Activated CD4-positive, alpha-beta T cell treated with anti-CD3 and anti-CD28 coated beads for 36 hours (primary cell): ENCODE measurements at regions of chr15 and their contacts with region 1.

Region 1: DNA sequence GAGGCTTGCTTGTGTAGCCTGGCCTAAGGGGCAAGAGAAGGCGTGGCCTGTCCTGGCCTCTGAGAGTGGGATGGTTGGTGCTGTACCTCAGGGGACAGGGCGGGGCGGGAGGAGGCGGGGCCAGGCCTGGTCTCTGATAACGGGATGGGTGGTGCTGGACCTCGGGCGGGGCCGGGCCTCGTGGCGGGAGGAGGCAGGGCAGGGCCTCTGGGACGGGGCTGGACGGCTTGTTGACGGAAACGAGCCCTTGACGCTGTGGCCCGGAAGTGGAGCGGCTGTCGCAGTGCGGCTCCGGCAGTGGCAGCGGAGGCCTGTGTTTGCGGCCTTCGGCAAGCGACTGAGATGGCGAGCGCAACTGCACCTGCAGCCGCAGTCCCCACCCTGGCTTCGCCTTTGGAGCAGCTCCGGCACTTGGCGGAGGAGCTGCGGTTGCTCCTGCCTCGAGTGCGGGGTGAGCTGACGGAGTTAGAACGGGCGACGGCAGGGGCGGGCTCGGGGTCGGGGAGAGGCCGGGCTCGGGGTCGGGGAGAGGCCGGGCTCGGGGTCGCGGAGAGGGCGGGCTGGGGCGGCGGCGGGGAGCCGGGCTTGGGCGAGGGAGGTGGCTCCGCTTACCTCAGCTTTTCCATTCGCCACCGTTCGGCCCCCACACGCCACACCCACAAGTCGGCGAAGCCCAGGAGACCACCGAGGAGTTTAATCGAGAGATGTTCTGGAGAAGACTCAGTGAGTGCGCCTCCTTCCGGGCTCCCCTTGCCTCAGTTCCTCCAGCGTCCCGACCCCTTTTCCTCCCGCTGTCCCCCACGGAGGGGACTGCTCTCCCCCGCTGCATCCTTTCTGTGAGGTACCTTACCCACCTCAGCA is at the start of gene CCNDBP1:
- DNase-seq: peak; percentile 94
- ATAC-seq: peak; percentile 96
- H3K4me3 Mint-ChIP-seq: peak within 1 kb of the TSS; percentile 90
- H3K27ac Mint-ChIP-seq: peak within 1 kb of the TSS; percentile 94
- H3K4me1 Mint-ChIP-seq: peaks cover 26% of the 10 kb centered on the region
- H3K27me3 Mint-ChIP-seq: no peaks in the 10 kb centered on the region
- total RNA-seq, gene CCNDBP1: 45.8 to 51.6 TPM

Region 2: GRCh38 chr15:42920519-42921227 is 264.7 kb before region 1 on chr15 and contains the start of gene TTBK2:
- CTCF ChIA-PET with region 1: no interaction called
- POLR2A ChIA-PET with region 1: no interaction called
- intact Hi-C with region 1: loop called in 1 of 2 experiments (anchors 1 kb)
- DNase-seq: peak; percentile 98
- ATAC-seq: peak; percentile 95
- H3K4me3 Mint-ChIP-seq: peak within 1 kb of the TSS; percentile 96
- H3K27ac Mint-ChIP-seq: peak within 1 kb of the TSS; percentile 96
- H3K4me1 Mint-ChIP-seq: peaks cover 26% of the 10 kb centered on the region
- H3K27me3 Mint-ChIP-seq: no peaks in the 10 kb centered on the region
- total RNA-seq, gene TTBK2: 9.7 to 10.5 TPM

Region 3: GRCh38 chr15:43133430-43134156 is 51.8 kb before region 1 on chr15 and contains the start of gene TMEM62:
- CTCF ChIA-PET with region 1: no interaction called
- POLR2A ChIA-PET with region 1: no interaction called
- intact Hi-C with region 1: loop called in 1 of 2 experiments (anchors 1 kb)
- DNase-seq: peak; percentile 82
- ATAC-seq: peak; percentile 80
- H3K4me3 Mint-ChIP-seq: peak within 1 kb of the TSS; percentile 79
- H3K27ac Mint-ChIP-seq: peak within 1 kb of the TSS; percentile 84
- H3K4me1 Mint-ChIP-seq: peaks cover 18% of the 10 kb centered on the region
- H3K27me3 Mint-ChIP-seq: no peaks in the 10 kb centered on the region
- total RNA-seq, gene TMEM62: 10.9 to 12.9 TPM

Region 4: DNA sequence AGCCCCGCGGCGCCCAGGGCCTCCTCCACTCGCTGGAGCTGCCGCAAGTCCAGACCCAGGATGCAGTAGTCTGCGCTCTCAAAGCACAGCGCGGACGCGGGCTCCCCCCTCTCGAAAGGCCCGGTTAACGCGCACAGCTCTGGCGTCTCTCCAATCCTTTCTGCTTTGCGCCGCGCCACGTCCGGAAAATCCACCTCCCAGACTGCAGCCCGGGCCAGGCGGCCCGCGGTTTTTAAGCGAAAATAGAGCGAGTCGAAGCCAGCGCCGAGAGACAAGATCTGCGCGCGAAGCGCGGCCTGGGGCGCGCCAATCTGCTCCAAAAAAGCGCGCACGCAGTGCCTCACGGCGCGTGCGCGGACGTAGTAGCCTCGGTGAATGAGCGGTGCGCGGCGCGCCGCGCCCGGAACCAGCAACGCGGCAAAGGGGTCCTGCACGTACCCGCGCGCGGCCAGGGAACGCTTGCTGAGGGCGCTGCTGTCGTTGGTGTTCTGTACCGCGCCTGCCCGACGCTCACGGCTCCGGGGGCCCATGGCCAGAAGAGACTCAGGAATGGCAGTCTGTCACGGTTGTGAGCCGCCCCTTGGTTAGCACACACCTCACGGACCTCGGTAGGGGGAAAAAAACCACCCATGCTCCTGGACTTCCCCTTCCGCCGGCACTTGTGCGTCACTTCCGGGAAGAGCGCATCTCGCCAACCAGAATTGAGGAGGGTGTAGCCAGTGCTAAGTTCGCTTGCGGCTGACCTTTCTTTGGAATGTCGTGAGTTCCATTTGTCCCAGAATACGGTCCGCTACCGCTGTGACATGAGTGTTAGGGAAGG is 144.8 kb after region 1 on chr15 and contains the start of gene LCMT2:
- CTCF ChIA-PET with region 1: no interaction called
- POLR2A ChIA-PET with region 1: no interaction called
- intact Hi-C with region 1: loop called in 1 of 2 experiments (anchors 1 kb)
- DNase-seq: peak; percentile 93
- ATAC-seq: peak; percentile 91
- H3K4me3 Mint-ChIP-seq: peak within 1 kb of the TSS; percentile 91
- H3K27ac Mint-ChIP-seq: peak within 1 kb of the TSS; percentile 95
- H3K4me1 Mint-ChIP-seq: peaks cover 32% of the 10 kb centered on the region
- H3K27me3 Mint-ChIP-seq: no peaks in the 10 kb centered on the region
- total RNA-seq, gene LCMT2: 7.6 to 8.5 TPM

Region 5: GRCh38 chr15:43776718-43777583 is 591.6 kb after region 1 on chr15 and contains the start of gene ELL3:
- CTCF ChIA-PET with region 1: no interaction called
- POLR2A ChIA-PET with region 1: no interaction called
- intact Hi-C with region 1: loop called in 1 of 2 experiments (anchors 1 kb)
- DNase-seq: peak; percentile 94
- ATAC-seq: peak; percentile 84
- H3K4me3 Mint-ChIP-seq: peak within 1 kb of the TSS; percentile 78
- H3K27ac Mint-ChIP-seq: peak within 1 kb of the TSS; percentile 92
- H3K4me1 Mint-ChIP-seq: peaks cover 19% of the 10 kb centered on the region
- H3K27me3 Mint-ChIP-seq: no peaks in the 10 kb centered on the region
- total RNA-seq, gene ELL3: 3.6 TPM